AG04450 (cell line): ENCODE measurements at regions of chr10 and their contacts with region 1.

Region 1: GRCh38 chr10:75111367-75111906 is at the start of gene SAMD8:
- DNase-seq: peak; percentile 92
- H3K4me3 ChIP-seq: peak within 1 kb of the TSS; percentile 93
- H3K27ac ChIP-seq: peak within 1 kb of the TSS; percentile 93
- H3K27me3 ChIP-seq: no peaks in the 10 kb centered on the region
- CTCF ChIP-seq: no peak; the same call in 1 of the 2 replicates
- polyA plus RNA-seq, gene SAMD8: 28.2 and 32.2 TPM in 2 replicates

Region 2: GRCh38 chr10:75226656-75227055 is 115.2 kb after region 1 on chr10:
- CTCF ChIA-PET with region 1: interaction called, 11 read pairs
- POLR2A ChIA-PET with region 1: interaction called, 11 read pairs
- DNase-seq: no peak
- H3K4me3 ChIP-seq: no peak overlapping the region
- H3K27ac ChIP-seq: no peak overlapping the region
- H3K27me3 ChIP-seq: no peaks in the 10 kb centered on the region
- CTCF ChIP-seq: no peak